GM12878 (cell line): ENCODE measurements at regions of chr1 and their contacts with region 1.

Region 1: DNA sequence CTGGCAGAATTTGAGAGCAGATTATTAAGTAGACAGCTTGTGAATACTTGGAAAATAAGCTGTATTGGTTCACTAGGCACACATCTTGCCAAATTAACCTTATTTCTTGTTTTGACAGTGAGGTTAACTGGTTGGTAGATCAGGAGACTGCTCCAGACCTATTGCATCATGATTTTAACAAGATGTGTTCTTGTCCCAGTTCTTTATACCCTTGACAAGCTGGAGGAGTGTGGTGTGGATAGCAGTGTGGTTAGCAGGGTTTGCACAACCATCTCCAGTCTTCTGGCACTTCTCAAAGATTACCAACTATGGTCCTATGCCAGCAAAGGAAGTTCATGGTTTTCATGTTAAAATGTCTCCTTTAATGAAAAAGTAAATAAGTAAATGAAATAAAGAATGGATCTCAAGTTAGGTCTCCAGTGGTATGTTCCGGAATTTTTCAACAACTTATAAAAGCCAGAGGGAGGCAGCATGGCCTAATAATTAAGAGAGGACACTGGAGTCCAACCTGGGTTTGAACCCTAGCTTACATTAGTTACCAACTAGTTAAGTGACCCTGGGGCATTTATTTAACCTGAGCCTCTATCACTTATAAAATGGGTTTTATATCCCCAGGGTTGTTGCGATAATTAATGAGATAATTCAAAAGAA is 34.1 kb downstream of the DDX20 start:
- DNase-seq: no peak
- ATAC-seq: no peak
- H3K4me3 ChIP-seq: no peak overlapping the region
- H3K27ac ChIP-seq: no peak overlapping the region
- H3K4me1 ChIP-seq: no peaks in the 10 kb centered on the region
- H3K27me3 ChIP-seq: peaks cover 0 to 3% of the 10 kb centered on the region in 2 experiments; a peak in 3 of 4 replicates
- CTCF ChIP-seq: no peak
- EP300 ChIP-seq: no peak
- POLR2A ChIP-seq: no peak
- RAD21 ChIP-seq: 0 out of 2 replicates have a peak, but pooled peaks have one; percentile 11

Region 2: GRCh38 chr1:110605901-110606656 is 1183.7 kb before region 1 on chr1 and contains the start of gene KCNA2:
- CTCF ChIA-PET with region 1: no interaction called
- POLR2A ChIA-PET with region 1: no interaction called
- RAD21 ChIA-PET with region 1: no interaction called
- SMC1A ChIA-PET with region 1: no interaction called
- in situ Hi-C with region 1: no loop called
- intact Hi-C with region 1: loop called (anchors 10 kb)
- DNase-seq: no peak
- ATAC-seq: peak; percentile 41
- H3K4me3 ChIP-seq: 0 out of 2 replicates have a peak within 1 kb of the TSS, but pooled peaks have one; percentile 22
- H3K27ac ChIP-seq: no peak within 1 kb of the TSS
- H3K4me1 ChIP-seq: no peaks in the 10 kb centered on the region; the same call in 1 of the 2 replicates
- H3K27me3 ChIP-seq: peaks cover 25 to 31% of the 10 kb centered on the region in 2 experiments
- CTCF ChIP-seq: no peak
- EP300 ChIP-seq: no peak
- POLR2A ChIP-seq: no peak
- RAD21 ChIP-seq: no peak
- polyA plus RNA-seq, gene KCNA2: 0.02 TPM in 1 of 2 experiments, not detected in the other

Region 3: GRCh38 chr1:111769517-111770146 is 20.2 kb before region 1 on chr1:
- CTCF ChIA-PET with region 1: interaction called, 3 read pairs
- POLR2A ChIA-PET with region 1: no interaction called
- RAD21 ChIA-PET with region 1: interaction called, 3 read pairs
- SMC1A ChIA-PET with region 1: interaction called, 11 read pairs
- in situ Hi-C with region 1: no loop called
- intact Hi-C with region 1: no loop called
- DNase-seq: peak; percentile 44
- ATAC-seq: peak; percentile 79
- H3K4me3 ChIP-seq: no peak overlapping the region
- H3K27ac ChIP-seq: no peak overlapping the region
- H3K4me1 ChIP-seq: no peaks in the 10 kb centered on the region
- H3K27me3 ChIP-seq: no peaks in the 10 kb centered on the region
- CTCF ChIP-seq: peak; percentile 66 to 87 (median 78)
- EP300 ChIP-seq: no peak
- POLR2A ChIP-seq: no peak
- RAD21 ChIP-seq: peak; percentile 92